HepG2 (cell line): ENCODE measurements at regions of chr1 and their contacts with region 1.

Region 1: DNA sequence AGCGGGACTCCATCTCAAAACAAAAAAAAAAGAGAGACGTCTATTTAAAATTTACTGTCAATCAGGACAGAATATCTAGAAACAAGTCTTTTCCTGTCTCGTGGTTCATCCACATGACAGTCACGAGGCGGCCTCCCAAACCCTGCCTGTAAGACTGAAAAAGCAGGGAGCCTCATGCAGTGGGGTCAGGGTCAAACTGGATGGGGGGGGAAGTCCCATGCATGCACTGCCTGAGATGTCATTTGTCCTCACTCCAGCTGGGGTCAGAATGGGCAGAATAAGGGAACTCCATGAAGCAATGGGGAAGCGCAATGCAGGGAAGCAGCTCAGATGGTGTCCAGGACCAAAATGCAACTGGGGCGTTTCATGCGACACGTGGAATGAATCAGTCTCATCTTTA is 85.5 kb downstream of the PIK3CD start:
- DNase-seq: no peak
- ATAC-seq: no peak
- H3K4me3 ChIP-seq: no peak overlapping the region
- H3K27ac ChIP-seq: no peak overlapping the region
- H3K4me1 ChIP-seq: no peaks in the 10 kb centered on the region
- H3K27me3 ChIP-seq: no peaks in the 10 kb centered on the region
- CTCF ChIP-seq: no peak
- EP300 ChIP-seq: no peak
- POLR2A ChIP-seq: no peak
- RAD21 ChIP-seq: no peak

Region 2: GRCh38 chr1:9867408-9868243 is 130.6 kb after region 1 on chr1:
- CTCF ChIA-PET with region 1: no interaction called
- POLR2A ChIA-PET with region 1: no interaction called
- in situ Hi-C with region 1: no loop called
- intact Hi-C with region 1: loop called (anchors 1 kb)
- DNase-seq: peak; percentile 46
- ATAC-seq: peak; percentile 85
- H3K4me3 ChIP-seq: no peak overlapping the region
- H3K27ac ChIP-seq: no peak overlapping the region
- H3K4me1 ChIP-seq: peaks cover 28% of the 10 kb centered on the region
- H3K27me3 ChIP-seq: no peaks in the 10 kb centered on the region
- CTCF ChIP-seq: peak; percentile 98
- EP300 ChIP-seq: no peak
- POLR2A ChIP-seq: no peak
- RAD21 ChIP-seq: peak; percentile 94